ENCODE measurements at regions of chr7 and their contacts with region 1.

Region 1: GRCh38 chr7:50142425-50143017 is 49.5 kb upstream of the ZPBP start:
- DNase-seq: peak; percentile 21
- ATAC-seq: peak; percentile 60; the same call in 1 of the 2 replicates
- H3K4me3 ChIP-seq: no peak overlapping the region
- H3K27ac ChIP-seq: no peak overlapping the region
- H3K4me1 ChIP-seq: no peaks in the 10 kb centered on the region
- H3K27me3 ChIP-seq: no peaks in the 10 kb centered on the region
- CTCF ChIP-seq: peak; percentile 63
- POLR2A ChIP-seq: no peak
- RAD21 ChIP-seq: peak; percentile 48

Region 2: GRCh38 chr7:51366930-51367613 is 1224.6 kb after region 1 on chr7:
- CTCF ChIA-PET with region 1: no interaction called
- POLR2A ChIA-PET with region 1: no interaction called
- dilution Hi-C with region 1: no loop called
- in situ Hi-C with region 1: no loop called
- intact Hi-C with region 1: loop called (anchors 5 kb)
- DNase-seq: peak; percentile 26
- ATAC-seq: peak; percentile 89
- H3K4me3 ChIP-seq: no peak overlapping the region
- H3K27ac ChIP-seq: no peak overlapping the region
- H3K4me1 ChIP-seq: no peaks in the 10 kb centered on the region
- H3K27me3 ChIP-seq: no peaks in the 10 kb centered on the region
- CTCF ChIP-seq: peak; percentile 44
- POLR2A ChIP-seq: no peak
- RAD21 ChIP-seq: peak; percentile 52